Activated T-helper 1 cell treated with anti-CD3 and anti-CD28 coated beads, Interleukin-12 subunit alpha, Interleukin-12 subunit beta, Interleukin-2, Interleukin-4 antibody, amounts not matched to agents 30 ng/mL and 10 ng/mL and 1 ng/mL, durations not matched to agents 14 hours and 24 hours and 36 hours (primary cell): ENCODE measurements at regions of chr12 and their contacts with region 1.

Region 1: DNA sequence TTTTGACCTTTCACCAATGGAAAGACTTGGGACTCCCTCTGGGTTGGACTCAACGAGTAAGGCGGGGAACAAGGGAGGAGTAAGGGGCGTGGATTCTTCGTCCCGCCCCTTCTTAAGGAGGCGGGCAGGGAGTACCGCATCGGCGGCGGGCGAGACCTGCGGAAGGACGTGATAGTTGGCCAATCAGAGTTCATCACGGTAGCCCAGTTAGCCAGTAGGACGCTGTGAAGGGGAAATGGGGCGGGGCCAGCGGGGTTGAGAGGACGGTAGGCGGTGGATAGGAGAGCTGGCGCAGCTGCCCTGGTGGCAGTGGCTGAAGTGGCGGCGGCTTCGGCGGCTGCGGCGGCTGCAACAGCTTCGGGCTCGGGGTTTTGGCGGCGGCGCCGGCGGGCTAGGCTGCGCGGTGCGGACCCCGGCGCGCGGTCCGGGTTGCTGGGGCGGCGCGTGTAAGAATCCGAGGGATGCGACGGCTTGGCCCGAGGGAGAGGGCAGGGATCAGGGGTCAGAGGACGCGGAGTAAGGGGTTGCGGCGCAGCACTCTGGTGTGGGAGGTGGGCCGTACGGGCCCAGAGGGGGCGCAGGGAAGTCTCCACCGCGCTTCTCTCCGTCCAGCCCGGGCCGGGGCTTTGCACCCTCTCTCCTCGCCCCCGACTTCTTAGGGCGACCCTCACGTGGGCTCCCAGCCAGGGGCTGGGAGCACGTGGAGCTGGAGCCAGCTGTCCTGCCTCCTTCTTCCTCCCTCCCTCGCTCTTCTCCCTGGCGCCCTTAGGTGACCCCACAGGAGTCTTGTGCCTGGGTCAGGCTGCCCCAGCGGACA is at the start of gene TPCN1:
- DNase-seq: peak; percentile 99
- H3K4me3 Mint-ChIP-seq: peak within 1 kb of the TSS; percentile 91
- H3K27ac Mint-ChIP-seq: peak within 1 kb of the TSS; percentile 92
- H3K4me1 Mint-ChIP-seq: peaks cover 33% of the 10 kb centered on the region
- H3K27me3 Mint-ChIP-seq: peaks cover under 1% of the 10 kb centered on the region
- total RNA-seq, gene TPCN1: 31.4 and 35.4 TPM in 2 replicates

Region 2: GRCh38 chr12:113092607-113093408 is 128.6 kb before region 1 on chr12:
- intact Hi-C with region 1: no loop called
- DNase-seq: no peak
- H3K4me3 Mint-ChIP-seq: no peak overlapping the region
- H3K27ac Mint-ChIP-seq: no peak overlapping the region
- H3K4me1 Mint-ChIP-seq: peaks cover 11% of the 10 kb centered on the region
- H3K27me3 Mint-ChIP-seq: no peaks in the 10 kb centered on the region

Region 3: GRCh38 chr12:113116875-113117274 is 104.5 kb before region 1 on chr12:
- intact Hi-C with region 1: no loop called
- DNase-seq: no peak
- H3K4me3 Mint-ChIP-seq: no peak overlapping the region
- H3K27ac Mint-ChIP-seq: no peak overlapping the region
- H3K4me1 Mint-ChIP-seq: no peaks in the 10 kb centered on the region
- H3K27me3 Mint-ChIP-seq: no peaks in the 10 kb centered on the region

Region 4: DNA sequence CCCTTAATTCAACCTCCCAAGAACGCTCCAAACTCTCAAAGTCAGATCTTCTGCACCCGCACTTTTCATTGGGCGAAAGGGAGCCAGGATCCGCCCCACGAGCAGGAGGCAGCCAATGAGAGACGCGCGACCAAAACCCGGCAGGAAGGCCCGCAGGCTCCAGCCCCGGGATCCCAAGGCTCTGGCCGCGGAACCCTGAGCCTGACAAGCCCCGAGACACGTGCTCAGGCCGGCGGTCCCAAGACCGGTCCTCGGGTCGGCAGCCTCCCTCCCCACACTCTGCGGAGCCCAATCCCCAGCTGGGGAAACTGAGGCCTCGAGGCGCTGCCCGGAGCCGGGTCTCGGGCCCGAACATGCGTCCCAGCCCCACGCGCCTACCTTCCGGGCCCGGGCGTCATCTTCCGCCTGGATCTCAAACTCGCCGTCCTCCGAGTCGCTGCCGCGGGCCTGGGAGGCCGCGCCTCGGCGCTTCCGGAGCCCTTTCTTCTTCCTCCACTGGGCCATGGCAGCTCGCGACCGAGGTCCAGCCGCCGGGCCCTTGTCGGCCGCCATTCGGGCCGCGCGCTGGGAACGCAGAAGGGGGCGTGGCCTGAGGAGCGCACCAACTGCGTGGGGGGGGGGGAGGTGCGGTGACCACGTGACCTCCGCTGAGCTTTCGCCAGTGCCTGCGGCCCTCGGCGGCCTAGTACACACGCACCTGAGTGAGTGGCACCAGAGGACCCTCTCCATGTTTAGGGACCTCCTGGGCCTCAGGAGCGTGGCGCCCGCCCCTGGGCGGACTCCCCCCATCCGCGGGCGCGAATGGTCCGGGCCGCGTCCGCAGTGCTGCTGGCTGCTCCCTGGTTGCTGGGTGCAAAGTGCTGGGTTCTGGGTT is 36.3 kb before region 1 on chr12 and contains the starts of genes DDX54 and RITA1:
- intact Hi-C with region 1: loop called (anchors 1 kb)
- DNase-seq: peak; percentile 85
- H3K4me3 Mint-ChIP-seq: peak within 1 kb of the TSS; percentile 92
- H3K27ac Mint-ChIP-seq: peak within 1 kb of the TSS; percentile 92
- H3K4me1 Mint-ChIP-seq: peaks cover 31% of the 10 kb centered on the region
- H3K27me3 Mint-ChIP-seq: no peaks in the 10 kb centered on the region
- total RNA-seq, gene DDX54: 121 and 133 TPM in 2 replicates
- total RNA-seq, gene RITA1: 27.1 and 31.4 TPM in 2 replicates

Region 5: DNA sequence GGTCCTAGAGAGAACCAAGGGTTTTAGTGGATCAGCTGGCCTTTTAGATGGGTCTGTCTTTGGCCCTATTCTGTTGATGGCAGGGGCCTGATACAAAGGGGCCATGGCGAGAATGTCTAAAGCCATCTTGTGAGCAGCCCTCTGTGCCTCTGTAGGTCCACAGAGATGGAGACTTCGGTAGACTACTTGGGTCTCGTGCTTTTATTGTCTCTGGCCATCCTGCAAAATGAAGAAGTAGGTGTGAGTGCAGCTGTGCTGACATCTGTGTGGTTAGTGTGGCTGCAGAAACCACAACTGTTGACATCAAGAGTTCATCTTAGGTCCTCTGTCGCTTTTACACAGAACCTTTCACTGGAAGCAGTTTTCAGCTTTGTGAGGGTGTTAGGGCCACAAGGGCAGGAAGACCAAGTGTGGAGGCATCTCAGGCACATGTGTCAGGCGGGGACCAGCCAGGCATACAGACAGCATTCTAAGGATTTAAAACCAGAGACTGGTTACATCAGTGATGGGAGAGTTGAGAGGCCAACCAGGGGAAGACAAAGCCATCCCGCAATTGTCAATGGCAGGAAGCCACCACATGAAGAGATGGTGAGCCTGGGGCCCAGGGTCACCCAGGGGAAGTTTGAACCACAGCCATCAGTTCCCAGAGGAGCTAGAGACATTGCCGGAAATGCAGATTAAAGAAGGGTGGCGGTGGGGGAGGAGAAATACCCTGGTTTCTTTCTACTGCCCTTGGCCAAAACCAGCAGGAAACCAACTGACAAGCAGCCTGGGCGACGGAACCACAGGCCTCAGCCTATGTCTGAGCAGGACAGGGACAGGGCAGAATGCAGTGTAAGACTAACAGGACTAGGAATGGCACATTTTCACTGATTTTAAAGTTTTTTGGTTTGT is 13.1 kb before region 1 on chr12:
- intact Hi-C with region 1: loop called (anchors 1 kb)
- DNase-seq: peak; percentile 72
- H3K4me3 Mint-ChIP-seq: peak overlapping the region; percentile 75
- H3K27ac Mint-ChIP-seq: peak overlapping the region; percentile 96
- H3K4me1 Mint-ChIP-seq: peaks cover 65% of the 10 kb centered on the region
- H3K27me3 Mint-ChIP-seq: no peaks in the 10 kb centered on the region

Region 6: DNA sequence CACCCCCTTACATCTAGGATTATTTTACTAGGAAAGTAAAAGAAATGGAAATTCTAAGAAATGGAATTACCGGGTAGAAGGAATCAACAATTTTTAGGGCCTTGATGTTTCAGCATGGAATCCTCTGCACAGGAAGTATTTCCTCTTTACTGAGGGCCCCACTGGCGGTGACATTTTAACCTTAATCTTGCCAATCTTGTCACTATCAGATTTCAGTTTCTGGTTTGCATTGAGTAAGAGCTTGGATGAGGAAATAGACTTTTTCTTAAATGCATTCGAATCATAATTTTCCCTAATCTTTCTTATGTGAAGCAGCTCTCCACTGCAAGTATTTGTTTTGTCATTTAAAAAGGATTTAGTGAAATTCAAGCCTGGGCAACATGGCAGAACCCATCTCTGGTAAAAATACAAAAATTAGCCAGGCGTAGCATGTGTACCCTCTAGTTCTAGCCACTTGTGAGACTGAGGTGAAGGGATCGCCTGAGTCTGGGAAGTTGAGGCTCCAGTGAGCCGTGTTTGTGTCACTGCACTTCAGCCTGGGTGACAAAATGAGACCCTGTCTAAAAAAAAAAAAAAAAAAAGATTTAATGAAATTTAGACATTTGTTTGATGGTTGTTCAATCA is 40.6 kb after region 1 on chr12:
- intact Hi-C with region 1: loop called (anchors 1 kb)
- DNase-seq: peak; percentile 33
- H3K4me3 Mint-ChIP-seq: peak overlapping the region; percentile 34
- H3K27ac Mint-ChIP-seq: peak overlapping the region; percentile 59
- H3K4me1 Mint-ChIP-seq: peaks cover 42% of the 10 kb centered on the region
- H3K27me3 Mint-ChIP-seq: no peaks in the 10 kb centered on the region

Region 7: GRCh38 chr12:113358381-113359132 is 137.2 kb after region 1 on chr12 and contains the start of gene PLBD2:
- intact Hi-C with region 1: loop called (anchors 1 kb)
- DNase-seq: peak; percentile 89
- H3K4me3 Mint-ChIP-seq: peak within 1 kb of the TSS; percentile 89
- H3K27ac Mint-ChIP-seq: peak within 1 kb of the TSS; percentile 69
- H3K4me1 Mint-ChIP-seq: peaks cover 13% of the 10 kb centered on the region
- H3K27me3 Mint-ChIP-seq: peaks cover 4% of the 10 kb centered on the region
- total RNA-seq, gene PLBD2: 15.3 and 16.3 TPM in 2 replicates